ENCODE measurements at regions of chrX and their contacts with region 1.

Region 1: DNA sequence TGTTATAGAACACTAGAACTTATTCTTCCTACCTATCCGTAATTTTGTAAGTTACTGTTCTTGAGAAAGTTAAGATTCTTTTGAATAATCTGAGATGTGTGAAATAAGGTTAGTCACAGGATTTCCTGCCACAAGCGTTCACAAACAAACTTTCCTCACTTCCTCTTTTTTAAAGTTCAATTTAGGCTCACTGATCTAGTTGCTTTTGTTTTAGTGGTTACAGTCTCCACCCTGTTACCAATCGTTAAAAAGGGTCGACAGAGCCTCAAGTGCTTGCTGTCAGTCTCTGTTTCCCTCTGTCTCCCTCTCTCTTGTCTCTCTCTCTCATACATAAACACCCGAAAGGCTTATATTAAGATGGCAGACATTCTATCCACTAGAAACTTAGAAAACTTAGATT is 35.9 kb upstream of the STK26 start:
- DNase-seq: peak in 7 of 9 donors; percentile 53 to 82 (median 72)
- ATAC-seq: peak; percentile 97
- H3K4me3 ChIP-seq: peak overlapping the region; percentile 19
- H3K4me3 Mint-ChIP-seq: peak overlapping the region; percentile 34 to 83 (median 74)
- H3K27ac ChIP-seq: peak overlapping the region; percentile 57
- H3K27ac Mint-ChIP-seq: peak overlapping the region; percentile 88 to 100 (median 97)
- H3K4me1 ChIP-seq: peaks cover 33 to 58% of the 10 kb centered on the region in 2 donors
- H3K4me1 Mint-ChIP-seq: peaks cover 38 to 86% (median 62%) of the 10 kb centered on the region in 7 donors
- H3K27me3 ChIP-seq: no peaks in the 10 kb centered on the region
- H3K27me3 Mint-ChIP-seq: no peaks in the 10 kb centered on the region

Region 2: GRCh38 chrX:131854581-131854980 is 132.7 kb before region 1 on chrX:
- CTCF ChIA-PET with region 1: interaction called, 3 read pairs
- POLR2A ChIA-PET with region 1: interaction called, 5 read pairs
- intact Hi-C with region 1: loop called in 1 of 2 experiments (anchors 1 kb)
- DNase-seq: peak in 5 of 9 donors; percentile 25 to 48 (median 36)
- ATAC-seq: no peak
- H3K4me3 ChIP-seq: no peak overlapping the region
- H3K4me3 Mint-ChIP-seq: no peak overlapping the region
- H3K27ac ChIP-seq: no peak overlapping the region
- H3K27ac Mint-ChIP-seq: peak overlapping the region in 1 of 9 donors; percentile 70
- H3K4me1 ChIP-seq: no peaks in the 10 kb centered on the region
- H3K4me1 Mint-ChIP-seq: no peaks in the 10 kb centered on the region
- H3K27me3 ChIP-seq: no peaks in the 10 kb centered on the region
- H3K27me3 Mint-ChIP-seq: no peaks in the 10 kb centered on the region

Region 3: GRCh38 chrX:131894987-131895386 is 92.3 kb before region 1 on chrX:
- CTCF ChIA-PET with region 1: interaction called, 3 read pairs
- POLR2A ChIA-PET with region 1: no interaction called
- intact Hi-C with region 1: loop called in 1 of 2 experiments (anchors 5 kb)
- DNase-seq: no peak
- ATAC-seq: no peak
- H3K4me3 ChIP-seq: no peak overlapping the region
- H3K4me3 Mint-ChIP-seq: no peak overlapping the region
- H3K27ac ChIP-seq: no peak overlapping the region
- H3K27ac Mint-ChIP-seq: no peak overlapping the region
- H3K4me1 ChIP-seq: no peaks in the 10 kb centered on the region
- H3K4me1 Mint-ChIP-seq: peaks cover 0 to 3% (median 0%) of the 10 kb centered on the region in 7 donors
- H3K27me3 ChIP-seq: no peaks in the 10 kb centered on the region
- H3K27me3 Mint-ChIP-seq: no peaks in the 10 kb centered on the region

Region 4: GRCh38 chrX:131944936-131945902 is 42.0 kb before region 1 on chrX:
- CTCF ChIA-PET with region 1: no interaction called
- POLR2A ChIA-PET with region 1: no interaction called
- intact Hi-C with region 1: no loop called
- DNase-seq: no peak
- ATAC-seq: no peak
- H3K4me3 ChIP-seq: no peak overlapping the region
- H3K4me3 Mint-ChIP-seq: no peak overlapping the region
- H3K27ac ChIP-seq: no peak overlapping the region
- H3K27ac Mint-ChIP-seq: no peak overlapping the region
- H3K4me1 ChIP-seq: no peaks in the 10 kb centered on the region
- H3K4me1 Mint-ChIP-seq: peaks cover 0 to 7% (median 0%) of the 10 kb centered on the region in 7 donors
- H3K27me3 ChIP-seq: no peaks in the 10 kb centered on the region
- H3K27me3 Mint-ChIP-seq: no peaks in the 10 kb centered on the region

Region 5: GRCh38 chrX:131970347-131970746 is 16.9 kb before region 1 on chrX:
- CTCF ChIA-PET with region 1: no interaction called
- POLR2A ChIA-PET with region 1: interaction called, 5 read pairs
- intact Hi-C with region 1: loop called in 1 of 2 experiments (anchors 2 kb)
- DNase-seq: no peak
- ATAC-seq: no peak
- H3K4me3 ChIP-seq: peak overlapping the region; percentile 5
- H3K4me3 Mint-ChIP-seq: peak overlapping the region in 8 of 10 donors; percentile 44 to 82 (median 62)
- H3K27ac ChIP-seq: no peak overlapping the region
- H3K27ac Mint-ChIP-seq: peak overlapping the region in 7 of 9 donors; percentile 56 to 89 (median 79)
- H3K4me1 ChIP-seq: peaks cover 0 to 3% of the 10 kb centered on the region in 2 donors
- H3K4me1 Mint-ChIP-seq: peaks cover 0 to 10% (median 6%) of the 10 kb centered on the region in 7 donors
- H3K27me3 ChIP-seq: no peaks in the 10 kb centered on the region
- H3K27me3 Mint-ChIP-seq: no peaks in the 10 kb centered on the region

Region 6: GRCh38 chrX:132004708-132005107 is 17.5 kb after region 1 on chrX:
- CTCF ChIA-PET with region 1: no interaction called
- POLR2A ChIA-PET with region 1: interaction called, 4 read pairs
- intact Hi-C with region 1: loop called in 1 of 2 experiments (anchors 2 kb)
- DNase-seq: no peak
- ATAC-seq: no peak
- H3K4me3 ChIP-seq: no peak overlapping the region
- H3K4me3 Mint-ChIP-seq: no peak overlapping the region
- H3K27ac ChIP-seq: no peak overlapping the region
- H3K27ac Mint-ChIP-seq: no peak overlapping the region
- H3K4me1 ChIP-seq: no peaks in the 10 kb centered on the region
- H3K4me1 Mint-ChIP-seq: peaks cover 8 to 32% (median 25%) of the 10 kb centered on the region in 7 donors
- H3K27me3 ChIP-seq: no peaks in the 10 kb centered on the region
- H3K27me3 Mint-ChIP-seq: peaks cover 0 to 2% (median 0%) of the 10 kb centered on the region in 5 donors

Measured in naive thymus-derived CD4-positive, alpha-beta T cell (primary cell).